ENCODE measurements at regions of chr11 and their contacts with region 1.

Region 1: GRCh38 chr11:75388386-75389275 is 10.7 kb upstream of the RPS3 start:
- DNase-seq: peak; percentile 33 to 77
- H3K4me3 ChIP-seq: 0 out of 8 replicates have a peak overlapping the region, but pooled peaks of 1 of the 4 experiments have one; percentile 1
- H3K27ac ChIP-seq: no peak overlapping the region
- H3K4me1 ChIP-seq: peaks cover 0 to 3% (median 0%) of the 10 kb centered on the region in 4 experiments; a peak in 3 of 7 replicates
- H3K27me3 ChIP-seq: no peaks in the 10 kb centered on the region
- CTCF ChIP-seq: peak; percentile 56 to 79 (median 78)
- EP300 ChIP-seq: no peak
- POLR2A ChIP-seq: no peak
- RAD21 ChIP-seq: peak; percentile 84 to 85

Region 2: GRCh38 chr11:75286826-75287465 is 101.7 kb before region 1 on chr11:
- CTCF ChIA-PET with region 1: interaction called, 327 read pairs
- POLR2A ChIA-PET with region 1: no interaction called
- DNase-seq: no peak
- H3K4me3 ChIP-seq: no peak overlapping the region
- H3K27ac ChIP-seq: no peak overlapping the region
- H3K4me1 ChIP-seq: peaks cover 0 to 6% (median 0%) of the 10 kb centered on the region in 4 experiments; a peak in 1 of 7 replicates
- H3K27me3 ChIP-seq: no peaks in the 10 kb centered on the region
- CTCF ChIP-seq: no peak
- EP300 ChIP-seq: no peak
- POLR2A ChIP-seq: no peak
- RAD21 ChIP-seq: no peak

Region 3: DNA sequence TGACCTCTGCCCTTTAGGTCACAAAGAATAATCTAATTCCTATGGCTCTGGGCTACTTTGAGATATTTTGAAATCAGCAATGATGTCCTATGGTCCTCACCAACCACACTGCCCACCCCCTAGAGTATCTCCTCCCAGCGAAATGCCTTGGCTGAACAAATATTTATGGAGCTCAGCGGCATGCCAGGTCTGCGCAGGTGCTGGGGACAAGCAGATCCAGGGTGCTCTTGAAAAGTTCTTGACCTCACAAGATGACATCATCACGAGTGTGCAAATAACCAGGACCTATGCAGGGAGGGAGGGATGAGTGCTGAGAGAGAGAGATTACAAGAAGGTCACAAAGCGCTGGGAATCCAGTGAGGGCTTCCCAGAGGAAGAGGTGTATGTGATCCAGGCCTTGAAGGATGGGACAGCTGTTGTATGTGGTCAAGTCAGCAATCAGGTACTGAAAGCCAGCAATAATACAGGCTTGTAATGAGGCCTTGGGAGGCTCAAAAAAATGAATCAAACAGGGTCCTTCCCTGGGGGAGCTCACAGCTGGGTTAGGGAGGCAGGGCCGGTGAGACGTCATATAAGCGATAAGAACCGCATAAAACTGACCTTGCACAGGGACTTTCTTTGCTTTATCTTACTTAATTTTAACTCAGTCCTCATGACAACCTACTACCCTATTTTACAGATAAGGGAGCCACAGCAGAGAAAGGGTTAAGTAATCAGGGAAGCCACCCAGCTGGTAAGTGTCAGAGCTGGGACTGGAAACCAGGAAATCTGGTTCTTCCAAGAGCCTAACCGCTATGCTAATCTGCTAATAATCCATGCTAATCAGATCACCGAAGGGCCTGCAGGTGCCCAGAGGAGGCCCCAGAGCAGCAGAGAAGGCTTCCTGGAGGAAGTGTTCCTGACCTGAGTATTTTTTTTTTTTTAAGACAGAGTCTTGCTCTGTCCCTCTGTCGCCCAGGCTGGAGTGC is 45.4 kb before region 1 on chr11:
- CTCF ChIA-PET with region 1: interaction called, 40 read pairs
- POLR2A ChIA-PET with region 1: interaction called, 7 read pairs
- DNase-seq: no peak
- H3K4me3 ChIP-seq: no peak overlapping the region; a peak in 1 of 8 replicates
- H3K27ac ChIP-seq: no peak overlapping the region
- H3K4me1 ChIP-seq: peaks cover 17 to 45% (median 27%) of the 10 kb centered on the region in 4 experiments
- H3K27me3 ChIP-seq: no peaks in the 10 kb centered on the region
- CTCF ChIP-seq: no peak
- EP300 ChIP-seq: peak in 1 of 2 experiments; percentile 46; a peak in 1 of 3 replicates
- POLR2A ChIP-seq: no peak
- RAD21 ChIP-seq: no peak

Region 4: DNA sequence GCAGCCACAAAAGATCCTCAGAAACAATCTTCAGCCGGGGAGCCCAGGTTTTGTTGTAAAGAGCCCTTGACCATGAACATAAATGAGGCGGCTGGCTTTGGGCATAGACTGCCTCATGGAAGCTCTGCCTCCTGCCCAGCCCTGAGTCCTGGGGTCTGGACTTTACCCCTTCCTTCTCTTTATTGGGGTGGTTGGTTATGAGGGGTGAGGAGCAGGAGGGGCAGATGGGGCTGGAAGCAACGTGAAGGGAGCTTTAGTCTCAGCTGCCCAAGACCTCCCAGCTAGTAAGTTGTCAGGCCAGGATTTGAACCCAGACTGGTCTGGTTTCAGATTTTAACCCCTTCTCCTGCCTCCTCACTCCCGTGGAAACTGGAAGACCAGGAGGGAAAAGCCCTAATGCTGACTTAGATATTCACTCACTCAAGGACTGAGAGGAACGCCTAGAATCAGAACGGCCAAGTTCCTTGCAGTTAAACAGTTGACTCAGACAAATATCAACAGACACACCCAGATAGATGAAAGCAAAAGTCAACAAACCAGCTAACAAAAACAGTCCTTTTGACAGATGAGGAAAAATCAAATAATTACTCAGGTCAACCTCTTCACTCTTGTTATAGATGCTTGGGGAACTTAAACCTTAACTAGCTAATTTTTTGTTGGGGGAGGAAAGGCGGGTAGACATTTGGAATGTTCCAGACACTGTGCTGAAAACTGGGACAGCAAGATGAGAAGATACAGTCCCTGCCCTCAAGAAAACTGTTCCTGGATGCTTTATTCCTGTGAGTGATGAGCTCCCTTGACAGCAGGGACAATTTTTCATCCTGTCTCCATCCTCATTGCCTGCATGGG is 16.5 kb before region 1 on chr11:
- CTCF ChIA-PET with region 1: interaction called, 12 read pairs
- POLR2A ChIA-PET with region 1: no interaction called
- DNase-seq: no peak
- H3K4me3 ChIP-seq: no peak overlapping the region
- H3K27ac ChIP-seq: no peak overlapping the region
- H3K4me1 ChIP-seq: no peaks in the 10 kb centered on the region
- H3K27me3 ChIP-seq: no peaks in the 10 kb centered on the region; a peak in 1 of 7 replicates
- CTCF ChIP-seq: no peak
- EP300 ChIP-seq: no peak
- POLR2A ChIP-seq: no peak
- RAD21 ChIP-seq: no peak

Region 5: GRCh38 chr11:75413864-75414263 is 25.2 kb after region 1 on chr11:
- CTCF ChIA-PET with region 1: interaction called, 201 read pairs
- POLR2A ChIA-PET with region 1: interaction called, 570 read pairs
- DNase-seq: no peak
- H3K4me3 ChIP-seq: no peak overlapping the region
- H3K27ac ChIP-seq: no peak overlapping the region
- H3K4me1 ChIP-seq: no peaks in the 10 kb centered on the region
- H3K27me3 ChIP-seq: no peaks in the 10 kb centered on the region
- CTCF ChIP-seq: no peak
- EP300 ChIP-seq: no peak
- POLR2A ChIP-seq: no peak
- RAD21 ChIP-seq: no peak

Region 6: DNA sequence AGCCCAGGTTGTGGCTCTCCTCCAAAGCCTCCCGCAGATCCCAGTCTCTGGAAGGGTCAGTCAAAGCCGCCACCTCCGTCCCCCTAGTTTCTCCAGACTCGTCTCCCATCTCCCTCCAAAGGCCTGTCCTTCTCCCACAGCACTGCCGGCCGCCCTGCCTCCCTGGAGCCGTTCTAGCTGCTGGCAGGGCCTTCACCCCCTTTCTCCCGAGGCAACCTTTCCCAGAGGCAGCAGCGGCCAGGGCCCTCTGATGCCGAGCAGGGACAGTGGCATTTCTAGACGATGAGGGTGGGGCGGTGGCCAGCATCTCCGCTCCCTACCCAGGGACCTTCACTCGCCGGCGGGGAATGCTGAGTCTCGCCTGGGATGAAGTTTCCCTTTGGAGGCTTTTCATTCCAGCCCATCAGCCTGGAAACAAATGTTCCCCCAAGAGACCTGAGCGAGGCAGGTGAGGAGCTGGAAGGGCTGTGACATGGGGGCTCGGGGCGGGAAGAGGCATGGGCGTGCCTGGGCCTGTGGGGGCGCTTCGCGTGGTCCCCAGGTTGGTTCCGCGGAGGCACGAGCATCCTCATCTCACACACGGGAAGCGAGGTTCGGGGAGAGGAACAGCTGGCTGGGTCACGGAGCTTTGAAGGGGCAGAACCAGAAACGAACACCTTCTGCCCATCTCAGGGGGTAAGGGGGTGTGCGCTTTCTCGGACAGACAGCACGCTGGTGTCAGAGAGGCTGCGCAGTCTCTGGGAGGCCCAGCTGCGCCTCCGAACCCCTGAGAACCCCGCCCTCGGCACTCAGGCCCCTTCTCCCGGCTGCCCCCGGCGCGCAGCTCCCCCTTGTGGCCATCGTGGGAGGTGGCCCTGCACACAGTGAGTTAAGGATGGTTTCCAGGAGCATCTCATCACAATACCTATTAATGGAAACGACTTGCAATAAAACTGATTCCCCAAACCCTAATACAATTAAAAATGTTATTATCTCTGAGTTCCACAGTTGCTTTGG is 62.5 kb after region 1 on chr11:
- CTCF ChIA-PET with region 1: interaction called, 20 read pairs
- POLR2A ChIA-PET with region 1: no interaction called
- DNase-seq: peak in 1 of 2 experiments; percentile 97
- H3K4me3 ChIP-seq: peak overlapping the region in 3 of 4 experiments; percentile 3 to 27 (median 5); a peak in 2 of 8 replicates
- H3K27ac ChIP-seq: no peak overlapping the region
- H3K4me1 ChIP-seq: peaks cover 0 to 6% (median 0%) of the 10 kb centered on the region in 4 experiments; a peak in 3 of 7 replicates
- H3K27me3 ChIP-seq: no peaks in the 10 kb centered on the region; a peak in 1 of 7 replicates
- CTCF ChIP-seq: peak; percentile 87 to 93 (median 93)
- EP300 ChIP-seq: no peak
- POLR2A ChIP-seq: no peak
- RAD21 ChIP-seq: peak; percentile 66 to 80

Region 7: DNA sequence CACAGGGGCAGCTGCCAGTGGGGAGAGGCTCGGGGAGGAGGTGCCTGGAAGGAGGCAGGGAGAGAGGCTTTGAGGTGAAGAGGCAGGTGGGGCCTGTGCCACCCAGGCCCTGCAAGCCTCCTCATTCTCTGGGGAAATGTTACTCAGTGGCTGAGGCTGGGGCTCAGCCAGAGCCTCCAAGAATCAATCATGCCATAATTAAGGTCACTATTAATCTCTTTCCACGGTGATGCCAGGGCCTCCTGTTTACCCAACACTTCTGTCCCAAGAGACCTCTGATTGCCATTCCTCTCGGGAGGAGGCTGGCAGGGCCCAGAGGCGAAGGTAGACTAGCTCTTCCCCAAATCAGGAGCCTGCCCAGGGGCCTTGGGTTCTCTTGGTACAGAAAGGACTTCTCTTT is 98.7 kb after region 1 on chr11:
- CTCF ChIA-PET with region 1: no interaction called
- POLR2A ChIA-PET with region 1: no interaction called
- DNase-seq: no peak
- H3K4me3 ChIP-seq: no peak overlapping the region
- H3K27ac ChIP-seq: no peak overlapping the region
- H3K4me1 ChIP-seq: peaks cover 2 to 17% (median 12%) of the 10 kb centered on the region in 4 experiments
- H3K27me3 ChIP-seq: no peaks in the 10 kb centered on the region
- CTCF ChIP-seq: no peak
- EP300 ChIP-seq: no peak
- POLR2A ChIP-seq: no peak
- RAD21 ChIP-seq: no peak

Measured in H1 (cell line).